ENCODE measurements at regions of chr14 and their contacts with region 1.

Region 1: GRCh38 chr14:102694530-102695166 is 82.6 kb upstream of the TRAF3 start:
- DNase-seq: peak; percentile 56 to 64 (median 61)
- H3K4me3 ChIP-seq: no peak overlapping the region
- H3K4me3 Mint-ChIP-seq: no peak overlapping the region
- H3K27ac ChIP-seq: no peak overlapping the region
- H3K27ac Mint-ChIP-seq: peak overlapping the region in 3 of 7 donors; percentile 8 to 76 (median 56)
- H3K4me1 ChIP-seq: peaks cover 12% of the 10 kb centered on the region
- H3K4me1 Mint-ChIP-seq: peaks cover 19 to 30% (median 22%) of the 10 kb centered on the region in 4 donors
- H3K27me3 ChIP-seq: no peaks in the 10 kb centered on the region
- H3K27me3 Mint-ChIP-seq: no peaks in the 10 kb centered on the region

Region 2: DNA sequence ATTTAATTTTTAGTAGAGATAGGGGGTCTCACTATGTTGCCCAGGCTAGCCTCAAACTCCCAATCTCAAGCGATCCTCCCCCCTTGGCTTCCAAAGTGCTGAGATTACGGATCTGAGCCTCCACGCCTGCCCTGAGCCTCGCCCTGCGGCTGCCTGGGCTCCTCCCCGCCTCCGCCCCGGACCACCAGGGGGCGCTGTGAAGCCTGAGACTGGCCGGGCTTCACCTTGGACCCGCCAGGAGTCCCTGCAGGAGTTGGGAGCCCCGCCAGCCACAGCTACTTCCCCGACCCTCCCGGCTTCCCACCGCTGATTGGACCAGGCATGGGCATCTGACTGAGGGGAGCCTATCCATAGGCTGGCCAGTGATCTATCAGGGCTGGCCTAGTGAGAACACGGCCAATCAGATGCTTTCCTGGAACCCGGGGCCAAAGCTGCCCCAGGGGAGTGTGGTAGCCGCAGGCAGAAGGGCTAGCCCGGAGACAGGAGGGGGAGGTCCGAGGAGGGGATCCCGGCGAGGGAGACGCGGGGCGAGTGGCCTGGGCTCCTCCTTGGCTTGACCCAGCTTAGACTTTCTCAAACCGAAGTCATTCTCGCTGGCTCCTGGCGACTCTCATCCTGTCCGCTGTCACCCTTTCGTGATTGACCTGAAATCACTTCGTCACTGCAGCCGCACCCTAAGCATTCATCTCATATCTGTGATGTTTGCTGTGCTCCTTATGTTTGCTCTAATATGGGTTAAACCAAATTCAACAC is 170.0 kb before region 1 on chr14:
- CTCF ChIA-PET with region 1: interaction called, 10 read pairs
- POLR2A ChIA-PET with region 1: interaction called, 4 read pairs
- intact Hi-C with region 1: loop called (anchors 2 kb)
- DNase-seq: peak; percentile 84 to 91 (median 87)
- H3K4me3 ChIP-seq: peak overlapping the region; percentile 59 to 87
- H3K4me3 Mint-ChIP-seq: peak overlapping the region; percentile 80 to 93 (median 89)
- H3K27ac ChIP-seq: peak overlapping the region; percentile 48
- H3K27ac Mint-ChIP-seq: peak overlapping the region; percentile 70 to 95 (median 90)
- H3K4me1 ChIP-seq: peaks cover 22% of the 10 kb centered on the region
- H3K4me1 Mint-ChIP-seq: peaks cover 14 to 31% (median 24%) of the 10 kb centered on the region in 4 donors
- H3K27me3 ChIP-seq: no peaks in the 10 kb centered on the region
- H3K27me3 Mint-ChIP-seq: no peaks in the 10 kb centered on the region

Region 3: DNA sequence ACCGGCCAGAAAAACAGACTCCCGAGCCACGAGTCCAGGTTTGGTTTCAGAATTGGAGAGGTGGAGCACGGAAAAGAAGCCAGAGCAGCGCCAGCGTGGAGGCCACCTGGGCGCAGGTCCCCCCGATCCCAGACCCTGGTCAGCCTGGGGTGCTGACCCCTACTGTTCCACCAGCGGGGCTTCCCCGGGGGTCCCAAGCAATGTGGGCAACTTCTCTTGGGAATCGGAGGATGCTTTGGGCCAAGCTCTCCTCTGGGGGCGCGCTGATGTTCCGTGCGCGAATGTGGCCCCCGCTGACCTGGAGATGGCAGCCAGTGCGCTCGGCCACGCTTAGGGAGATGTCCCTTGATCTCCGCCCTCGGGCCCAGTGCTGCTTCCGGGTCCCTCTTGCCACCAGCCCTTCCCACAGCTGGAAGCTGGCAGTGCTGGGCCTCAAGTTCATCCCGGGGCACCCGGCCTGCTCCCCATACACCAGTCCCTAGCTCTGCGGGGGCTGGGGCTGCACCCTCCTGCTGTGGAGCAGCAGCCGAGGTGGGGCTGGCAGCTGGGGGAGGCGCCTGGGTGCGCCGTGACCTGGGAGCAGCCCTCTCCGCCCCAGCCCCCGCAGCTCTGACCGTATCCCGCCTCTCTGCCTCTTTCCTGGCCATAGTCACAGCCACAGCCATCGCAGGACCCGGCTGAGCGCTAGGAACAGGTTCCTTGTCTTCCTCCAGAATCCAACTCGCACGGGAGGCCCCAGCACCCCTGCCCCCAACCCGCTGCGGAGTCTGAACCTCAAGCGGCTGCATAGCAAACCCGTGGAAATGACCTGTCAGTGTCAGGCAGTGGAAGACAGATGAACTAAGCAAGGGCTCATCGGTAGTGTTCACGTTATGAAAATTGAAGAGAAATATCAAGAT is 11.0 kb before region 1 on chr14:
- CTCF ChIA-PET with region 1: interaction called, 12 read pairs
- POLR2A ChIA-PET with region 1: no interaction called
- intact Hi-C with region 1: no loop called
- DNase-seq: no peak
- H3K4me3 ChIP-seq: no peak overlapping the region
- H3K4me3 Mint-ChIP-seq: no peak overlapping the region
- H3K27ac ChIP-seq: no peak overlapping the region
- H3K27ac Mint-ChIP-seq: no peak overlapping the region
- H3K4me1 ChIP-seq: peaks cover under 1% of the 10 kb centered on the region
- H3K4me1 Mint-ChIP-seq: peaks cover 13 to 27% (median 17%) of the 10 kb centered on the region in 4 donors
- H3K27me3 ChIP-seq: no peaks in the 10 kb centered on the region
- H3K27me3 Mint-ChIP-seq: no peaks in the 10 kb centered on the region

Region 4: GRCh38 chr14:102917469-102918211 is 223.0 kb after region 1 on chr14:
- CTCF ChIA-PET with region 1: interaction called, 26 read pairs
- POLR2A ChIA-PET with region 1: no interaction called
- intact Hi-C with region 1: loop called (anchors 1 kb)
- DNase-seq: peak in 4 of 5 donors; percentile 34 to 46 (median 43)
- H3K4me3 ChIP-seq: no peak overlapping the region
- H3K4me3 Mint-ChIP-seq: no peak overlapping the region
- H3K27ac ChIP-seq: no peak overlapping the region
- H3K27ac Mint-ChIP-seq: peak overlapping the region in 3 of 7 donors; percentile 2 to 87 (median 10)
- H3K4me1 ChIP-seq: no peaks in the 10 kb centered on the region
- H3K4me1 Mint-ChIP-seq: peaks cover 0 to 1% (median 0%) of the 10 kb centered on the region in 4 donors
- H3K27me3 ChIP-seq: no peaks in the 10 kb centered on the region
- H3K27me3 Mint-ChIP-seq: no peaks in the 10 kb centered on the region

Region 5: GRCh38 chr14:103104654-103105452 is 410.2 kb after region 1 on chr14:
- CTCF ChIA-PET with region 1: interaction called, 24 read pairs
- POLR2A ChIA-PET with region 1: no interaction called
- intact Hi-C with region 1: loop called (anchors 5 kb)
- DNase-seq: peak; percentile 61 to 73 (median 68)
- H3K4me3 ChIP-seq: no peak overlapping the region
- H3K4me3 Mint-ChIP-seq: peak overlapping the region in 4 of 8 donors; percentile 29 to 58 (median 52)
- H3K27ac ChIP-seq: no peak overlapping the region
- H3K27ac Mint-ChIP-seq: peak overlapping the region in 3 of 7 donors; percentile 52 to 82 (median 68)
- H3K4me1 ChIP-seq: peaks cover 13% of the 10 kb centered on the region
- H3K4me1 Mint-ChIP-seq: peaks cover 4 to 21% (median 11%) of the 10 kb centered on the region in 4 donors
- H3K27me3 ChIP-seq: peaks cover 8% of the 10 kb centered on the region
- H3K27me3 Mint-ChIP-seq: peaks cover 17 to 20% of the 10 kb centered on the region in 2 donors